ENCODE measurements at regions of chr12 and their contacts with region 1.

Region 1: GRCh38 chr12:47307680-47308399 is 228.1 kb upstream of the AMIGO2 start:
- DNase-seq: peak; percentile 33
- ATAC-seq: peak; percentile 88
- H3K4me3 Mint-ChIP-seq: peak overlapping the region; percentile 95
- H3K27ac Mint-ChIP-seq: peak overlapping the region; percentile 94
- H3K4me1 Mint-ChIP-seq: peaks cover 67% of the 10 kb centered on the region
- H3K27me3 Mint-ChIP-seq: no peaks in the 10 kb centered on the region
- CTCF ChIP-seq: peak; percentile 36

Region 2: GRCh38 chr12:46786774-46787173 is 521.1 kb before region 1 on chr12:
- CTCF ChIA-PET with region 1: no interaction called
- POLR2A ChIA-PET with region 1: no interaction called
- intact Hi-C with region 1: no loop called
- DNase-seq: no peak
- ATAC-seq: no peak
- H3K4me3 Mint-ChIP-seq: no peak overlapping the region
- H3K27ac Mint-ChIP-seq: no peak overlapping the region
- H3K4me1 Mint-ChIP-seq: no peaks in the 10 kb centered on the region
- H3K27me3 Mint-ChIP-seq: peaks cover 8% of the 10 kb centered on the region
- CTCF ChIP-seq: no peak

Region 3: DNA sequence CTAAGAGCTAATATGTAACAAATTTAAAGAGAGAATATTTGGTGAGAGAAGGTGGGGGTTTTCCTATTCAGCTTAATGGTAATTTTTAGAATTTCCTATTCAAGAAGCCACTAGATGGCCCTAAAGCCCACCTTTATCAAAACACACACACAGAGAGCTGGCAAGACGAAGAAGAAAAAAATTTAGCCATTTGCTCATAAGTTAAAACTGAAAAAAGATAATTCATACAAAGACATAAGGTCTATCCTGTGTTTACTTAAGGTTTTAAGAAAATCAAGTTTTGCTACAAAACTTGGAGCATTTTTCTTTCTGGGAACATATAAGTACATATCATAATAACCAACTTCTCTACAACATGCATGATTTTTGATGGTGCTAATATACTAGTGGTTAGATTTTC is 275.2 kb before region 1 on chr12:
- CTCF ChIA-PET with region 1: interaction called, 49 read pairs
- POLR2A ChIA-PET with region 1: interaction called, 13 read pairs
- intact Hi-C with region 1: loop called (anchors 1 kb)
- DNase-seq: no peak
- ATAC-seq: peak; percentile 81
- H3K4me3 Mint-ChIP-seq: no peak overlapping the region
- H3K27ac Mint-ChIP-seq: no peak overlapping the region
- H3K4me1 Mint-ChIP-seq: peaks cover 14% of the 10 kb centered on the region
- H3K27me3 Mint-ChIP-seq: no peaks in the 10 kb centered on the region
- CTCF ChIP-seq: peak; percentile 77

Region 4: DNA sequence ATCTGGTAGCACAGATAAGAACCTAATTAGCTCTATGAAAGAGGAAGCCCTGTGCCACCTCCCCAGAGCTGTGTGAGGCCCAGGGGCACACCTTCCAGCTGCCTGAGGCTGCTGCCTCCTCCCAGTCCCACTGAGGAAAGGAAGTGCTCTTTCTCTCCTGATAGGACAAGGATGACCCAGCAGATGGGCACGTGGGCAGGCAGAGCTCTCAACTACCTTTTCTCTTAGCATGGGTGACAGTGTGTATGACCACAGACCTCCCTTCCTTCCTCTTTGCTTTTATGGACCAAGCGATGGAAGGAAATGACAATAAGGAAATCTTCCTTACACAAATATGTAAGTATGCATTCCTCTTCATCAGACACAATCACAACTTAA is 100.5 kb before region 1 on chr12:
- CTCF ChIA-PET with region 1: interaction called, 4 read pairs
- POLR2A ChIA-PET with region 1: interaction called, 32 read pairs
- intact Hi-C with region 1: loop called (anchors 1 kb)
- DNase-seq: peak; percentile 51
- ATAC-seq: peak; percentile 86
- H3K4me3 Mint-ChIP-seq: peak overlapping the region; percentile 68
- H3K27ac Mint-ChIP-seq: peak overlapping the region; percentile 95
- H3K4me1 Mint-ChIP-seq: peaks cover 83% of the 10 kb centered on the region
- H3K27me3 Mint-ChIP-seq: no peaks in the 10 kb centered on the region
- CTCF ChIP-seq: no peak

Region 5: GRCh38 chr12:47276621-47277309 is 31.1 kb before region 1 on chr12:
- CTCF ChIA-PET with region 1: interaction called, 4 read pairs
- POLR2A ChIA-PET with region 1: interaction called, 11 read pairs
- intact Hi-C with region 1: loop called (anchors 2 kb)
- DNase-seq: no peak
- ATAC-seq: peak; percentile 86
- H3K4me3 Mint-ChIP-seq: peak overlapping the region; percentile 46
- H3K27ac Mint-ChIP-seq: peak overlapping the region; percentile 85
- H3K4me1 Mint-ChIP-seq: peaks cover 62% of the 10 kb centered on the region
- H3K27me3 Mint-ChIP-seq: no peaks in the 10 kb centered on the region
- CTCF ChIP-seq: no peak

Region 6: GRCh38 chr12:47356129-47356700 is 48.4 kb after region 1 on chr12:
- CTCF ChIA-PET with region 1: interaction called, 4 read pairs
- POLR2A ChIA-PET with region 1: interaction called, 33 read pairs
- intact Hi-C with region 1: loop called (anchors 1 kb)
- DNase-seq: no peak
- ATAC-seq: peak; percentile 77
- H3K4me3 Mint-ChIP-seq: peak overlapping the region; percentile 51
- H3K27ac Mint-ChIP-seq: peak overlapping the region; percentile 97
- H3K4me1 Mint-ChIP-seq: peaks cover 85% of the 10 kb centered on the region
- H3K27me3 Mint-ChIP-seq: no peaks in the 10 kb centered on the region
- CTCF ChIP-seq: no peak

Region 7: DNA sequence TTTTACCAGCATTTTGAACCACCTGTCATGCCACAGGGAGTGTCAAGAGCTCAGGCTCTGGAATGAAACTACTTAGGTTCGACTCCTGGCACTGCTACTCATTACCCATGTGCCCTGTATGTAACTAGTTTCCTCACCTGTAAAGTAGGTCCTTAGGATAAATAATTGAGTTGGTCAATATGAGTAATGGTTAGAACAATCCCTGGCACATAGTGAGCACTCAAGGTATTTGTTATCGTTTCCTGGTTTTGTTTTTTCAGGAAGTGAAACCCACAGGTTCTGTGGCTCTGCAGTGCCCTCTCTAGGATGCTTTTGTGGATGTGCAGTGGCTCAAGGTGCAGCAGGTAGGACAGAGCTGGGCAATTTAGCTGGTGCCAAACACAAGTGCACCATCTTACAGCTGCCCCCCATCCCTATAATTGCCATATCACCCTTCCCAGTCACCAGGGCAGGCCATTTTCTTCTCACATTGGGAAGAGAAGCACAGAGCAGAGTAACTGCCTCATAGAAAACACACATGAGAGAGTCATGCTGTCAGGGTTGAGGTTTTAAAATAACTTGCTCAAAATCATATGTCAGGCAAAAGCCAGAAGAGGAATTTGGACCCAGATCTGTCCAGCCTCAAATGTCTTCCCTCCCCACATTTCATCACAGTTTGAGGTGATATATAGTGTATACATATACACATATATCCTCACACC is 100.5 kb after region 1 on chr12:
- CTCF ChIA-PET with region 1: interaction called, 13 read pairs
- POLR2A ChIA-PET with region 1: interaction called, 9 read pairs
- intact Hi-C with region 1: loop called (anchors 1 kb)
- DNase-seq: peak; percentile 46
- ATAC-seq: peak; percentile 97
- H3K4me3 Mint-ChIP-seq: no peak overlapping the region
- H3K27ac Mint-ChIP-seq: peak overlapping the region; percentile 63
- H3K4me1 Mint-ChIP-seq: peaks cover 28% of the 10 kb centered on the region
- H3K27me3 Mint-ChIP-seq: no peaks in the 10 kb centered on the region
- CTCF ChIP-seq: no peak